GM12878 (cell line): ENCODE measurements at regions of chr2 and their contacts with region 1.

Region 1: DNA sequence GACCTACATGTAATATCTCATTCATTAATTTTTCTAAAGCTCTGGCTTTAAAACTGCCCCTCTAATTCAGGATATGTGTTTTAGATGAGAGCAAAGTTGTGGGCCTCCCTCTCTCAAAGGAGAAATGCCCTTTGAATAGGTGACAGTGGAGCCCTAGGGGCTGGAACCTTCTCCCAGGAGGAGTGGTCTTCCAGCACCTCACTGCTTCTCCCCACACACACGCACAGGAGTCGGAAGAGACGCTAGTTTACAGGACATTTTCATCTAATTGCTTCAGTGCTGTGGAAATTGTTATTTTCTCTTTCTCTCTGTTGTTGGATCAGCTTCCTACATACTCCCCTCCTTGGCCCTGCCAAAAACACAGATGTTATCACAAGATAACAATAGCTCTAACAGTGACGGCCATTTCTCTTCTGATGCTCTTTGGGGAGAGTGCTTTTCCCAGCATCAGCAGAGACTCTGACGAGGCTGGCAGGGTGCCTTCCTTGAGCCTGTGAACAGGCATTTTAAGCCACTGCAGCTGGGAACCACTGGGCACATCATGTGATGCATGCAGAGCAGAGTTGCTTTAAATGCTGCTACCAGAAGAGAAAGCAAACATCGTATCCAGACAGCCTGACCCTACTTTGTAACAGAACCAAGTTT is 209.4 kb upstream of the SP5 start:
- DNase-seq: no peak
- ATAC-seq: no peak
- H3K4me3 ChIP-seq: no peak overlapping the region
- H3K27ac ChIP-seq: no peak overlapping the region
- H3K4me1 ChIP-seq: peaks cover 15% of the 10 kb centered on the region
- H3K27me3 ChIP-seq: no peaks in the 10 kb centered on the region
- CTCF ChIP-seq: no peak
- EP300 ChIP-seq: no peak
- POLR2A ChIP-seq: no peak
- RAD21 ChIP-seq: no peak

Region 2: GRCh38 chr2:170493426-170494097 is 12.2 kb before region 1 on chr2:
- CTCF ChIA-PET with region 1: interaction called, 4 read pairs
- POLR2A ChIA-PET with region 1: interaction called, 7 read pairs
- RAD21 ChIA-PET with region 1: interaction called, 7 read pairs
- SMC1A ChIA-PET with region 1: interaction called, 67 read pairs
- in situ Hi-C with region 1: no loop called
- intact Hi-C with region 1: no loop called
- DNase-seq: no peak
- ATAC-seq: no peak
- H3K4me3 ChIP-seq: no peak overlapping the region
- H3K27ac ChIP-seq: no peak overlapping the region
- H3K4me1 ChIP-seq: no peaks in the 10 kb centered on the region
- H3K27me3 ChIP-seq: no peaks in the 10 kb centered on the region
- CTCF ChIP-seq: no peak
- EP300 ChIP-seq: no peak
- POLR2A ChIP-seq: no peak
- RAD21 ChIP-seq: no peak

Region 3: DNA sequence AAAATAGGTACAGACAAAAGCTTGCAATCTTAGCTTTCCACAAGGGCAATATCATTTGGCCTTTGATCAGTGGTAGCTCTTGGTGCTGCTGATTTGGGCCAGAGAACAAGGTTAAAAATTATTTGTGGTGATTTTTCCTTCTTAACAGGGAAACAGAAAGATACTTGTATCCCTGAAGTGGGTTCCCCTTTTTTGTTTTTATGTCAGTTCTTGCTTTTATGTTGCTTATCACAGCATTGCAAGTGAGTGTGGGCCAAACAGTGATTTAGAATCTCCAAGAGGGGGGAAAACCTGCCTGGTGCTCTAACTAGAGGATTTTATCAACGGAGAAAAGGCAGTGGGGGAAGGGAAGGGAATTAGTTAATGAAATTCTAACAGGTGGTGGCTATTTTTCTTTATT is 11.8 kb after region 1 on chr2:
- CTCF ChIA-PET with region 1: interaction called, 5 read pairs
- POLR2A ChIA-PET with region 1: interaction called, 11 read pairs
- RAD21 ChIA-PET with region 1: interaction called, 23 read pairs
- SMC1A ChIA-PET with region 1: interaction called, 203 read pairs
- in situ Hi-C with region 1: no loop called
- intact Hi-C with region 1: no loop called
- DNase-seq: no peak
- ATAC-seq: no peak
- H3K4me3 ChIP-seq: no peak overlapping the region
- H3K27ac ChIP-seq: no peak overlapping the region
- H3K4me1 ChIP-seq: no peaks in the 10 kb centered on the region
- H3K27me3 ChIP-seq: no peaks in the 10 kb centered on the region
- CTCF ChIP-seq: no peak
- EP300 ChIP-seq: no peak
- POLR2A ChIP-seq: no peak
- RAD21 ChIP-seq: no peak

Region 4: GRCh38 chr2:170523506-170523905 is 17.8 kb after region 1 on chr2:
- CTCF ChIA-PET with region 1: interaction called, 14 read pairs
- POLR2A ChIA-PET with region 1: interaction called, 11 read pairs
- RAD21 ChIA-PET with region 1: interaction called, 27 read pairs
- SMC1A ChIA-PET with region 1: interaction called, 203 read pairs
- in situ Hi-C with region 1: no loop called
- intact Hi-C with region 1: no loop called
- DNase-seq: no peak
- ATAC-seq: no peak
- H3K4me3 ChIP-seq: no peak overlapping the region
- H3K27ac ChIP-seq: no peak overlapping the region
- H3K4me1 ChIP-seq: peaks cover 13% of the 10 kb centered on the region
- H3K27me3 ChIP-seq: no peaks in the 10 kb centered on the region
- CTCF ChIP-seq: 0 out of 6 replicates have a peak, but pooled peaks of 1 of the 3 experiments have one; percentile 8
- EP300 ChIP-seq: no peak
- POLR2A ChIP-seq: no peak
- RAD21 ChIP-seq: 0 out of 2 replicates have a peak, but pooled peaks have one; percentile 6

Region 5: GRCh38 chr2:170530284-170530745 is 24.6 kb after region 1 on chr2:
- CTCF ChIA-PET with region 1: interaction called, 14 read pairs
- POLR2A ChIA-PET with region 1: interaction called, 8 read pairs
- RAD21 ChIA-PET with region 1: interaction called, 27 read pairs
- SMC1A ChIA-PET with region 1: interaction called, 203 read pairs
- in situ Hi-C with region 1: no loop called
- intact Hi-C with region 1: no loop called
- DNase-seq: no peak
- ATAC-seq: peak; percentile 13; the same call in 2 of the 3 replicates
- H3K4me3 ChIP-seq: no peak overlapping the region
- H3K27ac ChIP-seq: no peak overlapping the region
- H3K4me1 ChIP-seq: peaks cover 4% of the 10 kb centered on the region; the same call in 1 of the 2 replicates
- H3K27me3 ChIP-seq: no peaks in the 10 kb centered on the region
- CTCF ChIP-seq: no peak
- EP300 ChIP-seq: no peak
- POLR2A ChIP-seq: no peak
- RAD21 ChIP-seq: no peak

Region 6: DNA sequence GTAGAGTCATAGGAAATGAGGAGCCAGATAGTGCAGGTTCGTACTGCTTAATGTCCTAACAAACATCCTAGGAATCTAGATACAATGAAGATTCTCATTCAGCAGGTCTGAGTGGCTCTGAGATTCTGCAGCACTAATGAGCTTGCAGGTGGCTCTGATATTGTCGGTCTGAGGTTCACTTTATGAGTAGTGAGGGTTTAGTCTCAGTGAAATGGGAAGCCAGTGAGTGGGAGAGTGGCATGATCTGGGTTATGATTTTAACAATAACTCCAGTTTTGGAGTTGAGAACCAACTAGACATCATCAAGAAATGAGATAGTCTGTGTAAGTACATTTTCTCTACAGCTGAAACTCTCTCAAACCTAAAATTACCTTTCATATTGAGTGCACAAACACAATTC is 42.6 kb after region 1 on chr2:
- CTCF ChIA-PET with region 1: no interaction called
- POLR2A ChIA-PET with region 1: no interaction called
- RAD21 ChIA-PET with region 1: interaction called, 8 read pairs
- SMC1A ChIA-PET with region 1: interaction called, 19 read pairs
- in situ Hi-C with region 1: no loop called
- intact Hi-C with region 1: no loop called
- DNase-seq: no peak
- ATAC-seq: peak; percentile 81
- H3K4me3 ChIP-seq: no peak overlapping the region
- H3K27ac ChIP-seq: no peak overlapping the region
- H3K4me1 ChIP-seq: no peaks in the 10 kb centered on the region
- H3K27me3 ChIP-seq: no peaks in the 10 kb centered on the region
- CTCF ChIP-seq: no peak
- EP300 ChIP-seq: peak in 1 of 2 experiments; percentile 40; a peak in 1 of 4 replicates
- POLR2A ChIP-seq: no peak
- RAD21 ChIP-seq: no peak

Region 7: DNA sequence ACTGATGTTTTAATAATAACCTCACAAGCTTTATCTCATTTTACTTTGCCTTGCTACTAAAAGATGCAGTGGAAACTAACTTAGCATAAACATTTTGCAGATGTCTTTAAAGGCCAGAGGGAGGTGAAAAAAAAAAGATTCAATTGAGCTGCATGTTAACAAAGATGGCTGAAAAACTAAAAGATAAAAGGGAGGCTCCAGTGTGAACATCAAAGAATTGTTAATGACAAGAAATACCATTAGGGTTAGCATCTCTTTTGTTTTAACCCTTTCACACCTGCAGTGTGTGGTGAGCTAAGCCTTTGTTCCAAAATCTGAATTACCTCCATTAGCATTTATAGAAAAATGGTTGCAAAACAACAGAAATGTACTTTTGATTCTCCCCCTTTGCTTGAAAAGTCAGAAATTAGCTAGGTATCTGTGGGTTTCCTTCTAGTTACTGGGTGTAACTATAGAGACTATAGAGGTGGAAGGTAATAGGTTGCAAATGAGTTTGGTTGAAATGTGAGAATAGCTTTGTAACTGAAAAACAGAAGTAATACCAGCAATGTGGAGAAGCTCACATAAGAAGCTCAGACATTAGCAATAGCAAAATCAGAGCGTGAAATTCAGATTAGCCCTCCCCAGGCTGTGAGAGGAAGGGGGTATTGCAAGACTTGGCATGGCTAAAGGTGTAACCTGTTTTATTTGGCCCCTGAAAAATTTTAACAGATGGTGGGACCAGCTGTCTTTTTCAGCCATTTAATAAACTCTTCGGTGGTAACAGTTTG is 174.6 kb after region 1 on chr2:
- CTCF ChIA-PET with region 1: interaction called, 4 read pairs
- POLR2A ChIA-PET with region 1: no interaction called
- RAD21 ChIA-PET with region 1: interaction called, 26 read pairs
- SMC1A ChIA-PET with region 1: interaction called, 57 read pairs
- in situ Hi-C with region 1: no loop called
- intact Hi-C with region 1: no loop called
- DNase-seq: peak; percentile 40
- ATAC-seq: peak; percentile 99
- H3K4me3 ChIP-seq: peak overlapping the region; percentile 7; the same call in 1 of the 2 replicates
- H3K27ac ChIP-seq: no peak overlapping the region
- H3K4me1 ChIP-seq: peaks cover 13% of the 10 kb centered on the region; the same call in 1 of the 2 replicates
- H3K27me3 ChIP-seq: no peaks in the 10 kb centered on the region
- CTCF ChIP-seq: no peak
- EP300 ChIP-seq: peak in 1 of 2 experiments; percentile 50; a peak in 1 of 4 replicates
- POLR2A ChIP-seq: no peak
- RAD21 ChIP-seq: no peak